Naive thymus-derived CD4-positive, alpha-beta T cell (primary cell): ENCODE measurements at regions of chr4 and their contacts with region 1.

Region 1: DNA sequence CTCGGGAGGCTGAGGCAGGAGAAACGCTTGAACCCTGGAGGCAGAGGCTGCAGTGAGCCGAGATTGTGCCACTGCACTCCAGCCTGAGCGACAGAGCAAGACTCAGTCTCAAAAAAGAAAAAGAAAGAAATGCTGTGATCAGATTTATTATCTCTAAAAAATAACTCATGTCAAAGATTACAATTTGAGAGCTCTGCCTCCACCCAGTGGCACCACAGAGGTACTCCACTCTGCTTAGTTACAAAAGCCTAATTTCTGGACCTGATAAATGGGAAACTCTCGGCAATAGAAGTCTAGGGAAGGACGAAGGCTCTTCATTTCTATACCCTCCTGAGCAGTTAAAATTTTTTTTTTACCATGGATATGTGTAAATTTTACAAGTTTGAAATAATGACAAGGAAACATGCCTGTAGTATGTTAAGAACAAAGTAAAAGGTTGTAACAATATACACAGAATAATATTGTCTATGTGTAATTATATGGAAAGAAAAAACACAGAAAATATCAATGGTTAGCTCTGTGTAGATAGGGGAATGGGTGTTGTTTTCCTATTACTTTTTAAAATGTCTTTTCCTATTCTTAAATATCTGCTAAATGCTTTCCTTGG is 149.8 kb downstream of the STIM2 start:
- DNase-seq: peak; percentile 17 to 67 (median 52)
- ATAC-seq: peak; percentile 89
- H3K4me3 ChIP-seq: no peak overlapping the region
- H3K4me3 Mint-ChIP-seq: no peak overlapping the region
- H3K27ac ChIP-seq: no peak overlapping the region
- H3K27ac Mint-ChIP-seq: peak overlapping the region in 7 of 9 donors; percentile 6 to 91 (median 71)
- H3K4me1 ChIP-seq: no peaks in the 10 kb centered on the region
- H3K4me1 Mint-ChIP-seq: peaks cover 6 to 25% (median 14%) of the 10 kb centered on the region in 7 donors
- H3K27me3 ChIP-seq: no peaks in the 10 kb centered on the region
- H3K27me3 Mint-ChIP-seq: no peaks in the 10 kb centered on the region

Region 2: GRCh38 chr4:26028793-26029567 is 981.5 kb before region 1 on chr4:
- CTCF ChIA-PET with region 1: no interaction called
- POLR2A ChIA-PET with region 1: no interaction called
- intact Hi-C with region 1: loop called (anchors 2 to 5 kb)
- DNase-seq: peak in 8 of 9 donors; percentile 11 to 82 (median 18)
- ATAC-seq: peak; percentile 80
- H3K4me3 ChIP-seq: no peak overlapping the region
- H3K4me3 Mint-ChIP-seq: peak overlapping the region in 2 of 10 donors; percentile 12 to 39
- H3K27ac ChIP-seq: no peak overlapping the region
- H3K27ac Mint-ChIP-seq: no peak overlapping the region
- H3K4me1 ChIP-seq: no peaks in the 10 kb centered on the region
- H3K4me1 Mint-ChIP-seq: peaks cover 0 to 10% (median 0%) of the 10 kb centered on the region in 7 donors
- H3K27me3 ChIP-seq: peaks cover 0 to 4% of the 10 kb centered on the region in 2 donors
- H3K27me3 Mint-ChIP-seq: peaks cover 0 to 27% (median 16%) of the 10 kb centered on the region in 5 donors

Region 3: DNA sequence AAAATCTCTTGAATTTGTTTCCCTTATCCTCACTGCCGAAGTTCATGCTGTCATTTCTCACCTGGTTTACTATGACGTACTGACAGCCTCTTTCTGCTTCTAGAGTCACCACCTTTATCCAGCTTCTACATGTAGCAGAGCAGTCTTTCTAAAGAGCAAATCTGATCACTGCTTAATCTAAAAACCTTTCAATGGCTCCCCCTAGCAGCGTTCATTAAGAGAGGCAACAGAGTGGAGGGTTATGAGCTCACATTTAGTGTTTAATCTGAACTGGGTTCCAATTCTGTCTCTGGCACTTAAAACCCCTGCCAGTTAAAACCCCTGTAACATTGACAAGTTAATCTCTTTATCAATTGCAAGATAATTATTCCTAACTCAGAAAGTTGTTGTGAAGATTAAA is 685.2 kb before region 1 on chr4:
- CTCF ChIA-PET with region 1: no interaction called
- POLR2A ChIA-PET with region 1: no interaction called
- intact Hi-C with region 1: loop called (anchors 1 to 5 kb)
- DNase-seq: peak in 6 of 9 donors; percentile 16 to 40 (median 26)
- ATAC-seq: peak; percentile 46
- H3K4me3 ChIP-seq: no peak overlapping the region
- H3K4me3 Mint-ChIP-seq: peak overlapping the region in 2 of 10 donors; percentile 4 to 61
- H3K27ac ChIP-seq: no peak overlapping the region
- H3K27ac Mint-ChIP-seq: peak overlapping the region in 4 of 9 donors; percentile 1 to 53 (median 9)
- H3K4me1 ChIP-seq: peaks cover 10 to 12% of the 10 kb centered on the region in 2 donors
- H3K4me1 Mint-ChIP-seq: peaks cover 41 to 58% (median 53%) of the 10 kb centered on the region in 7 donors
- H3K27me3 ChIP-seq: no peaks in the 10 kb centered on the region
- H3K27me3 Mint-ChIP-seq: no peaks in the 10 kb centered on the region

Region 4: DNA sequence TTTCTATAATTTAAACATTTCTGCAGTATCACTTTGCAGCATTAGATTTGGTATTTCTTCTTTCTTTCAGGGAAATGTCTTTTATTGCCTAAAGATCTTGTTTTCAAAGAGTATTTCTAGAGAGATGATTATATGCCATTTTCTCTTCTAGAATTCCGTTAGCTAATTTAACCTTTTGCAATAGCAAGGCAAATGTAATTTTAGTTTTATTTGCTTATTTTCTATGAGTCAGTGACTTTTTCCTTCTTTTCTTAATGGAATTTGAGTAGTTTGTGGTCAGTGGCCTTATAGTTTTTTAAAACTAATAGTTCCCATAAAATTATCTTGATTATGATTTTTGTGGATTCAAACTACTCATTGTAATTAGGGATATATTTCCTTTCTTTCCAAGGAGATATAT is 592.3 kb before region 1 on chr4:
- CTCF ChIA-PET with region 1: no interaction called
- POLR2A ChIA-PET with region 1: no interaction called
- intact Hi-C with region 1: loop called in 1 of 2 experiments (anchors 5 kb)
- DNase-seq: no peak
- ATAC-seq: no peak
- H3K4me3 ChIP-seq: no peak overlapping the region
- H3K4me3 Mint-ChIP-seq: no peak overlapping the region
- H3K27ac ChIP-seq: no peak overlapping the region
- H3K27ac Mint-ChIP-seq: no peak overlapping the region
- H3K4me1 ChIP-seq: no peaks in the 10 kb centered on the region
- H3K4me1 Mint-ChIP-seq: peaks cover 0 to 9% (median 4%) of the 10 kb centered on the region in 7 donors
- H3K27me3 ChIP-seq: no peaks in the 10 kb centered on the region
- H3K27me3 Mint-ChIP-seq: no peaks in the 10 kb centered on the region

Region 5: GRCh38 chr4:26583865-26584652 is 426.4 kb before region 1 on chr4 and contains the start of gene TBC1D19:
- CTCF ChIA-PET with region 1: interaction called, 3 read pairs
- POLR2A ChIA-PET with region 1: interaction called, 5 read pairs
- intact Hi-C with region 1: loop called (anchors 1 to 5 kb)
- DNase-seq: peak; percentile 77 to 92 (median 87)
- ATAC-seq: peak; percentile 96
- H3K4me3 ChIP-seq: peak within 1 kb of the TSS; percentile 83
- H3K4me3 Mint-ChIP-seq: peak within 1 kb of the TSS; percentile 86 to 98 (median 95)
- H3K27ac ChIP-seq: peak within 1 kb of the TSS; percentile 92
- H3K27ac Mint-ChIP-seq: peak within 1 kb of the TSS; percentile 96 to 100 (median 98)
- H3K4me1 ChIP-seq: peaks cover 10 to 11% of the 10 kb centered on the region in 2 donors
- H3K4me1 Mint-ChIP-seq: peaks cover 10 to 51% (median 28%) of the 10 kb centered on the region in 7 donors
- H3K27me3 ChIP-seq: no peaks in the 10 kb centered on the region
- H3K27me3 Mint-ChIP-seq: peaks cover 0 to 5% (median 0%) of the 10 kb centered on the region in 5 donors
- total RNA-seq, gene TBC1D19: 4.9 to 8.7 (median 6.4) TPM

Region 6: DNA sequence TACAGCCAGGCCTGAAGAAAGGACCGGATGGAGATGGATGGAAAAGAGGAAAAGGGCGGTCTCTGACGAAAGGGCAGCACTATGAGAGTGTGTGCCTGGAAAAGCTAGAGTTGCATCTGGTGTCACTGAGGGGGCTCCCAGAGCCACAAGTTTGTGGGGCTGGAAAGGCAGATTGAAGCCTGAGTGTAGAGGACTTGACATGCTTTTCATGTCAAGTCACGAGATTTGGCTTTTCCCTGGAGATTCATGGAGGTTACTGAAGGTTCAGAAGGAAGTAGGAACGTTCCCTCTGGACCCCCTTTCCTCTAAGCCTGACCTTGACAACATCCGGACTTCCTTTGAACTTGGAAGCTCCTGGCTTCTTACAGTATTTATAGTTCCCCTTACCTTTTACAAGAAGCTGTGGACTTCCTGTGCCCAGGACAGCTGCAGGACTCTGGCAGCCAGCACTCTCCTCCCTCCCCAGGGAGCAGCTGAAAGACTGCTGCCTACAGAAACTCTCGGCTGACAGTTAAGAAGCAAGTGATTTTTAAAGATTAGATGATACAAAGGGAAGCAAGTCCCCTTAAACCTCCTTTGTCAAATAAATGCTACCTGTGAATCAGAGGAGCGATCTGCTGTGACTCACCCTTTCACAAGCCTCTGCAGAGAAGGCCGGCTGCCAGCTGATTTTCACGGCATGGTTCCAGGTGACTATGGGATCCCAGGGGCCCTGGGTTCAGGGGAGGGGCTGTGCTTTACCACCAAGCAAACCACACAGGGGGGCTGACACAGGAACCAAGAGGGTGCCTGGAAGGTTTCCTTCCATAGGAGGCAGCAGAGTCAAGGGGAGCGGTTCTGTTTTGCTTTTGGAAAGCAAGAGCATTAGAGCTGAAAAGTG is 222.7 kb before region 1 on chr4:
- CTCF ChIA-PET with region 1: interaction called, 9 read pairs
- POLR2A ChIA-PET with region 1: no interaction called
- intact Hi-C with region 1: loop called in 1 of 2 experiments (anchors 1 kb)
- DNase-seq: peak in 7 of 9 donors; percentile 5 to 43 (median 24)
- ATAC-seq: peak; percentile 60
- H3K4me3 ChIP-seq: no peak overlapping the region
- H3K4me3 Mint-ChIP-seq: no peak overlapping the region
- H3K27ac ChIP-seq: no peak overlapping the region
- H3K27ac Mint-ChIP-seq: peak overlapping the region in 5 of 9 donors; percentile 5 to 85 (median 33)
- H3K4me1 ChIP-seq: no peaks in the 10 kb centered on the region
- H3K4me1 Mint-ChIP-seq: peaks cover 0 to 14% (median 10%) of the 10 kb centered on the region in 7 donors
- H3K27me3 ChIP-seq: no peaks in the 10 kb centered on the region
- H3K27me3 Mint-ChIP-seq: peaks cover 0 to 4% (median 0%) of the 10 kb centered on the region in 5 donors

Region 7: DNA sequence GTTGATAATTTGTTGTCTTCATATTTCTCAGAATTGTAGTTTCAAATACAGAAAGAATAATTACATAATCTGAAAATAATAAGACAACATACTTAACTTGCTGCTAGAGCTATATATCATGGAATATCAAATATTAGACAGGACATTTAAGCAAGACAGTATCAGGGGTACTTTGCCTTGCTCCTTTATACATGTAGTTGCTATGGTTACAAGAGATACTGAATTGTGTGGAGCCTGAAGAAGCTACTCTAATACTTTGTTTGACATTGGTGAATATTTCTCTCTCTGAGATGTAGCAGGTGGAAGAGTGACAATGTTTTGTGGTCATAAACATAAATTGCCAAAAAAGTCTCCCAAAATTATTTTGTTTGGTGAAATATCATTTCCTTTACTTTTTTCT is 1587.0 kb after region 1 on chr4:
- CTCF ChIA-PET with region 1: no interaction called
- POLR2A ChIA-PET with region 1: no interaction called
- intact Hi-C with region 1: no loop called
- DNase-seq: no peak
- ATAC-seq: no peak
- H3K4me3 ChIP-seq: no peak overlapping the region
- H3K4me3 Mint-ChIP-seq: no peak overlapping the region
- H3K27ac ChIP-seq: no peak overlapping the region
- H3K27ac Mint-ChIP-seq: no peak overlapping the region
- H3K4me1 ChIP-seq: no peaks in the 10 kb centered on the region
- H3K4me1 Mint-ChIP-seq: no peaks in the 10 kb centered on the region
- H3K27me3 ChIP-seq: no peaks in the 10 kb centered on the region
- H3K27me3 Mint-ChIP-seq: no peaks in the 10 kb centered on the region